Activated naive CD4-positive, alpha-beta T cell treated with anti-CD3 and anti-CD28 coated beads for 36 hours (primary cell): ENCODE measurements at regions of chr15 and their contacts with region 1.

Region 1: DNA sequence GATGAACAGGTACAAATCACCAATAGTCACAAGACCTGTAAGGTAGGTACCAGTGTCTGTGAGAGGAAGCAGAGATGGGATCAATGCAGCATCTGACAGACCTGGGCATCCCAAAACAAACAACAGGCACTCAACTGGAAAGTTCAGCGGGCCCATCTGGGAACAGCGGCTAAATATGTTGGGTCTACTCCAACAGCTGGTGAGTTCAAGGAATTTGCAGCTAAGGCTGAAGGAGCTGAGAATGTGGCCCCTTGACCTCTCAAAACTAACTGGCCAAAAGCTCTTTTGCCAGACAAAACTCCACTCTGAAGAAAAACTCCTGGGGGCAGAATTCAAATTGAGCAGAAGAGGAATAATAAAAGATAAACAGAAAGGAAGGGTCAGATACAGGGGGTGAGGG is 24.4 kb downstream of the AVEN start:
- DNase-seq: no peak
- H3K4me3 Mint-ChIP-seq: no peak overlapping the region
- H3K27ac Mint-ChIP-seq: no peak overlapping the region
- H3K4me1 Mint-ChIP-seq: peaks cover 14% of the 10 kb centered on the region
- H3K27me3 Mint-ChIP-seq: no peaks in the 10 kb centered on the region

Region 2: DNA sequence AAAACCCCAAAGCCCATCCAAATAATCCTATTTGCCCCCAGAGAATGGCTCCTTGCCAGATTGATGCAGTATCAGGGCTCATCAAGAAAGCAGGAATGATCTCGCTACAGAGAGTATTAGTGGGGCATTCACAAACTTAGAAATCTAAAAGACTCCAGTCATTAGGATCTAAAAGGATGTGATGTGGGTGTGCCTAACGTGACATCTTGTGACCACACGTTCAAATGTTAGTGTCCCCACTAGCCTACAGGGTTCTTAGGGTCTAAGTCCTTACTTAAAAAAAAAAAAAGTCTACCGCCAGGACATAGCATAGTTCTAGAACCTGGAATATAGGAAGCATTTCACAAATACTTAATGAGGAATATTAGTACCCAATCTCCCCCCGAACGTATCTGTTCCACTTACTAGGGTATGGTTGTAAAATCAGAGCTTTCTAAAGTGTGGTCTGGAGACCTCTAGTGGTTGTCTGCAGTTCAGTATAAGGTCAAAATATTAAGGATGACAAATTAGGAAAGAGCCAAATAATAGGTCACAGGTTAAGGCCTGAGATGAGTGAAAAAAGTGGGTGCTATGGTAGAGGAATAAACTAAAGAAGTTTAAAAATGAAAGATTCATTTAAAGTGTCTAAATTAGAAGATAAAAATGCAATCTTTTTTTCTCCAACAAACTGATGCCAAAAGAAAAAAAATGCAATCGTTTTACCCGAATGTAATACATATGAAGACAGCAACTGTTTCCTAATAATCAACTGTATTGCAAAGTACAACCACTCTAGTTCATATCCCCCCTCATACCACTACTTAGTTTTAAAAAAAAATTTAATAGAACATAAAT is 50.5 kb before region 1 on chr15:
- CTCF ChIA-PET with region 1: no interaction called
- intact Hi-C with region 1: loop called (anchors 5 kb)
- DNase-seq: no peak
- H3K4me3 Mint-ChIP-seq: no peak overlapping the region
- H3K27ac Mint-ChIP-seq: no peak overlapping the region
- H3K4me1 Mint-ChIP-seq: no peaks in the 10 kb centered on the region
- H3K27me3 Mint-ChIP-seq: no peaks in the 10 kb centered on the region

Region 3: GRCh38 chr15:34025252-34025651 is 10.7 kb after region 1 on chr15:
- CTCF ChIA-PET with region 1: no interaction called
- intact Hi-C with region 1: no loop called
- DNase-seq: no peak
- H3K4me3 Mint-ChIP-seq: no peak overlapping the region
- H3K27ac Mint-ChIP-seq: no peak overlapping the region
- H3K4me1 Mint-ChIP-seq: no peaks in the 10 kb centered on the region
- H3K27me3 Mint-ChIP-seq: no peaks in the 10 kb centered on the region